AG04449 (cell line): ENCODE measurements at regions of chr7 and their contacts with region 1.

Region 1: DNA sequence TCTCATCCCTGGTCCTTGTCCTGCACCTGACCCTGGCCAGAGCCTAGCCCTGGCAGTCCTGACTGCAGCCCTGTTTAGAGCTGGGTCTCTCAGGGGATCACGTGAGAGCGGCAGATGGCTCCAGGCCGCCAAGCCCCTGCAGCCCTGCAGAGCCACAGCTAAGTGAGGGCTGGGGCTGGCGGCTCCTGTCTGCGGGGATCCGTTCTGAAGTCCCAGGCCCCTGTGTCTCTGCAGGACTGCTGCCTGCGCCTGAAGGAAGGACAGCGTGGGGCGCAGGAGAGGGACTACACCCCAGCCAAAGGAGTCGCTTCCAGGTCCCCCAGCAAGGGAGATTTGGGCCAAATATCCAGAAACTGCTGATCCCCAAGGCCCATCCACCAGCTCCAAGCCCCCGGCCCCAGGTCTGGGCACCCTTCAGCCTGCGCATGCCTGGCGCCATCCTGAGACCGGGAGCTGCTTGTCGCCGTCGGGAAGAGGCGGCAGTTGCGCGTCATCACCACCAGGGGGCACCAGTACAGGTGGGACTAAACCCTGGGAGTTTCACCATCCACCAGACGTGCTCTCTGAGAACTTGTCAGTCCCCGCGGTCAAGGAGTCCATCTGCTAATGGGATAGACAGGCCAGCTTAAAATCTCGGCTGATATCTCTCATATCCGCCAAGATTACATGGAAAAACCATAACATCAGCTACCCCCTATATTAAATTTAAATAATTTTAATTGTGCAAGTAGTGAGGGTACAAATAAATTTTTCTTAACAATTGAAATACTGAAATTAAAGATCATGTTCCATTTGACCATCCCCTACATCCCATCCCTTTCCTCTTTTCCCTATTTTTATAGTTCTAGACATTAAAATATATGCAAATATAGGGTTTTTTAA is 25.1 kb upstream of the GHRHR start:
- DNase-seq: no peak
- H3K4me3 ChIP-seq: no peak overlapping the region
- CTCF ChIP-seq: peak; percentile 97

Region 2: GRCh38 chr7:30800785-30801252 is 137.9 kb before region 1 on chr7:
- CTCF ChIA-PET with region 1: interaction called, 12 read pairs
- POLR2A ChIA-PET with region 1: no interaction called
- DNase-seq: no peak
- H3K4me3 ChIP-seq: no peak overlapping the region
- CTCF ChIP-seq: peak; percentile 65

Region 3: DNA sequence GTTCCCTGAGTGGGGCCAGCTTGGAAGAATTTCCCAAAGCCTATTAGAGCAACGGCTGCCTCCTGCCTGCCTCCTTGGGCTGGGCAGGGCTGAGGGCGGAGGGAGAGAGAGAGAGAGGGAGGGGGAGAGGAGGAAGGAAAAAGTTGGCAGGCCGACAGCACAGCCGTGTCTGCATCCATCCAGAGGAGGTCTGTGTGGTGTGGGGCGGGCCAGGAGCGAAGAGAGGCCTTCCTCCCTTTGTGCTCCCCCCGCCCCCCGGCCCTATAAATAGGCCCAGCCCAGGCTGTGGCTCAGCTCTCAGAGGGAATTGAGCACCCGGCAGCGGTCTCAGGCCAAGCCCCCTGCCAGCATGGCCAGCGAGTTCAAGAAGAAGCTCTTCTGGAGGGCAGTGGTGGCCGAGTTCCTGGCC is 27.1 kb before region 1 on chr7 and contains the start of gene AQP1:
- CTCF ChIA-PET with region 1: interaction called, 11 read pairs
- POLR2A ChIA-PET with region 1: no interaction called
- DNase-seq: no peak
- H3K4me3 ChIP-seq: no peak within 1 kb of the TSS
- CTCF ChIP-seq: no peak

Region 4: DNA sequence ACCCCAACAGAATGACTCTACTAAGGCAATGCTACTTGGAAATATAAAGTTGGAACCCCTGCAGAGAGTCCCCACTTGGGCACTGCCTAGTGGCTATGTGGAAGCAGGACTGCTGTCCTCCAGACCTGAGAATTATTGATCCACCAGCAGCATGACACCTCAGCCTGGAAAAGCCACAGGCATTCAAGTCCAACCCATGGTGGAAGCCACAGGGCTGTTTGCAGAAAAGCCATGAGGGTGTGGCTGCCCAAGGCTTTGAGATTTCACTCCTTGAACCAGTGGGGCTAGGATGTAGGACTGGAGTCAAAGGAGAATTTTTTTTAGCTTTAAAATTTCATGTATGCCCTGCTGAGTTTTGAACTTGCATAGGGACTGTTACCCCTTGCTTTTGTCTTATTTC is 11.5 kb after region 1 on chr7:
- CTCF ChIA-PET with region 1: interaction called, 19 read pairs
- POLR2A ChIA-PET with region 1: no interaction called
- DNase-seq: no peak
- H3K4me3 ChIP-seq: no peak overlapping the region
- CTCF ChIP-seq: no peak

Region 5: DNA sequence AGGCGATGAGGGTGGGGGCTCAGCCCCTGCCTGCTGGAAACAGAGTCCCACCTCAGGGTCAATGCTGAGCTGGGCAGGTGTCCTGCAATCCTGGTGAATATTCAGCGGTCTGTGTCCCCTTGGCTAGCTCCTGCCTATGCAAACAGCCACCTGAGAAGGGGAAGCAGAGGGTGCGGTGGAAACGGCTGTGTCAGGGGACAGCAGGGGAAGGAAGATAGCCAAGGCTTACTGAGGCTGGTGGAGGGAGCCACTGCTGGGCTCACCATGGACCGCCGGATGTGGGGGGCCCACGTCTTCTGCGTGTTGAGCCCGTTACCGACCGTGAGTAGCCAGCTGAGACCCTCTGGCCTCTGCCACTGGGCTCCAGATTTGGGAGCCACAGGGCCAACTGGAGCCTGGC is 25.1 kb after region 1 on chr7 and contains the start of gene GHRHR:
- CTCF ChIA-PET with region 1: interaction called, 24 read pairs
- POLR2A ChIA-PET with region 1: no interaction called
- DNase-seq: no peak
- H3K4me3 ChIP-seq: no peak within 1 kb of the TSS
- CTCF ChIP-seq: no peak

Region 6: GRCh38 chr7:30983042-30983913 is 44.6 kb after region 1 on chr7:
- CTCF ChIA-PET with region 1: interaction called, 15 read pairs
- POLR2A ChIA-PET with region 1: no interaction called
- DNase-seq: no peak
- H3K4me3 ChIP-seq: no peak overlapping the region
- CTCF ChIP-seq: peak; percentile 92

Region 7: DNA sequence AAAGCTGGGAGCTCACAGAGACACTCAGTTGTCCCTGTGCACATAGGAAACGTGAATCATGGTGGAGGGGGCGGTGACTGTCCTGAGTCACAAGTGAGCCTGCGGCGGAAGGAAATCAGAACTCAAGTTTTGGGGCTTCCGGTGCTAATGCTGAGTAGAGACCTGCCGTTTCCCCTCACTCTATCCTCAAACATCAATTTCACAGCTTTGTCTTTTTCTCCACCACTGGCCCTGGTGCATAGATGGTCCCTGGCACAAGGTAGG is 135.4 kb after region 1 on chr7:
- CTCF ChIA-PET with region 1: no interaction called
- POLR2A ChIA-PET with region 1: no interaction called
- DNase-seq: no peak
- H3K4me3 ChIP-seq: no peak overlapping the region
- CTCF ChIP-seq: no peak